ENCODE measurements at regions of chr15 and their contacts with region 1.

Region 1: DNA sequence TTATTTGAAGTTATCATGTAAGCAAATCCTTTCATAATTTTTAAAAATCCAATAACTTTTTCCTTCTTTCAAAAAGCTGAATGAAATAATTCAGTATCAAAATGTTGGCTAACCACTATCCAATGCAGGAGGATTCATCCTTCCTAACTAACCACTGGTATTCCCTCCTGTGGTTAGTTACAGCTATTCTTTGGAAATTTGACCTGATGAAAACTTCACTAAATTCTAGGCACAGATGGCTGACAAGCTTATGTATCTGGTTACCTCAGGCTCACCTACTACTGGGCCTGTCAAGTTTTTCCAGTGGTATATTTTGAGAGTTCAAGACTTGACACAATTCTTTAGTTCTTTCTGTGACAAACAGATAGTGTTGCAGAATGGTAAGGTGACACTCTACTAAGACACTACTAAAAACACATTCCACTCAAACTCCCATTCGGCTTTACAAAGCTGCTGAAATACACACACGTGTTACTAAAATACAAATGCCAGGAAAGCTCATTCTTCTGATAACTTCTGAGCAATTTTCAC is 15.8 kb downstream of the NPTN start:
- DNase-seq: no peak
- ATAC-seq: no peak
- H3K4me3 ChIP-seq: no peak overlapping the region
- H3K4me3 Mint-ChIP-seq: no peak overlapping the region
- H3K27ac ChIP-seq: no peak overlapping the region
- H3K27ac Mint-ChIP-seq: no peak overlapping the region
- H3K4me1 ChIP-seq: peaks cover 0 to 2% of the 10 kb centered on the region in 2 experiments
- H3K4me1 Mint-ChIP-seq: peaks cover 52 to 59% (median 56%) of the 10 kb centered on the region in 3 donors
- H3K27me3 ChIP-seq: no peaks in the 10 kb centered on the region
- H3K27me3 Mint-ChIP-seq: no peaks in the 10 kb centered on the region

Region 2: GRCh38 chr15:73485372-73485771 is 132.0 kb before region 1 on chr15:
- CTCF ChIA-PET with region 1: no interaction called
- POLR2A ChIA-PET with region 1: no interaction called
- DNase-seq: no peak
- ATAC-seq: no peak
- H3K4me3 ChIP-seq: no peak overlapping the region
- H3K4me3 Mint-ChIP-seq: no peak overlapping the region
- H3K27ac ChIP-seq: no peak overlapping the region
- H3K27ac Mint-ChIP-seq: no peak overlapping the region
- H3K4me1 ChIP-seq: no peaks in the 10 kb centered on the region
- H3K4me1 Mint-ChIP-seq: no peaks in the 10 kb centered on the region
- H3K27me3 ChIP-seq: peaks cover 0 to 4% of the 10 kb centered on the region in 2 experiments
- H3K27me3 Mint-ChIP-seq: peaks cover 16 to 22% of the 10 kb centered on the region in 2 donors

Region 3: DNA sequence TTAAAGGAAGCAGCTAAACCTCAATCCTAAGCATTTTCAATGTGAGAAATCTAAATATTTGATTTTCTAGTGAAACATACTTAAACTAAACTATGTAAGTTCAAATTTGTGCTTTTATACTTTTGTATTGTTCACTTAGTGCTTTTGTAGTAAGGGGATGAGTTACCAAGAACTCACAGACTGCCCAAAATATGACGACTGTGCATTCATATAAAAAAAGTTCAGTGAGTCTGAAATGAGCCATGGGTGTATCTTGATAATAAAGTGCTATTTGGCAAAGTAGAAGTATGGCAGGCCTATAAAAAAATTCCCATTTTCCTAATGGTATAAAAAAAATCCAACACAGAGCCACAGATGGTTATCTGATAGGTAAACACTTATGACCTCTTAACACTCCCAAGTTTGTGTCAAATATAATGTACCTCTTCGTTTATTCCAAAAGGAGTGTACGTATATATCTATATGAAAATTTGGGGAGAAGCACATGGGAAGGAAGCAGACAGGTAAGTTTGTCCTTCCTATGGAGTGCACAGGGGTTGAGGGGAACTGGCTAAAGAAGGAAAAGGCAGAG is 50.3 kb before region 1 on chr15:
- CTCF ChIA-PET with region 1: interaction called in 1 of 2 experiments, 10 read pairs
- POLR2A ChIA-PET with region 1: interaction called in 1 of 2 experiments, 3 read pairs
- DNase-seq: no peak
- ATAC-seq: no peak
- H3K4me3 ChIP-seq: no peak overlapping the region
- H3K4me3 Mint-ChIP-seq: no peak overlapping the region
- H3K27ac ChIP-seq: no peak overlapping the region
- H3K27ac Mint-ChIP-seq: no peak overlapping the region
- H3K4me1 ChIP-seq: no peaks in the 10 kb centered on the region
- H3K4me1 Mint-ChIP-seq: no peaks in the 10 kb centered on the region
- H3K27me3 ChIP-seq: no peaks in the 10 kb centered on the region
- H3K27me3 Mint-ChIP-seq: no peaks in the 10 kb centered on the region

Region 4: DNA sequence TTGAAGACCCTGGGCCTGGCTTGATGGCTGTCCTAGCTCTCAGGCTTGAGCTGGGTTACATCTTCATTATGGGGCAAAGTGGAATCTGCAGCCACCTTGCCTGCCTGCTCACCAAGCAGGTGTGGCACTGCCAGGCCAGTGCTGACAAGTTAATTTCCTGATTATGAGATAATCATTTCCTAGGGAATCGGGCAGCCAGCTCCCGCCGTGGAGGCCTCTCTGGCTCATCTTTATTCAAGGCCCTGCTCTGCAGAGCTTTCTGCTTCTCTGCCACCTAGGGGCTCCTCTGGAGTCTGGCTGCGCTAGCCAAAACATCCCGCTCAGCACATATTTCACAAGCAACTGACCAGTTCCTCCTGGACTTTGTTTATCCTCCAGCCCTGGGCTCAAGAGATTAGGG is 318.8 kb after region 1 on chr15:
- CTCF ChIA-PET with region 1: no interaction called
- POLR2A ChIA-PET with region 1: no interaction called
- DNase-seq: no peak
- ATAC-seq: no peak
- H3K4me3 ChIP-seq: no peak overlapping the region
- H3K4me3 Mint-ChIP-seq: no peak overlapping the region
- H3K27ac ChIP-seq: no peak overlapping the region
- H3K27ac Mint-ChIP-seq: peak overlapping the region in 1 of 2 donors; percentile 2
- H3K4me1 ChIP-seq: peaks cover 0 to 8% of the 10 kb centered on the region in 2 experiments
- H3K4me1 Mint-ChIP-seq: peaks cover 8 to 40% (median 15%) of the 10 kb centered on the region in 3 donors
- H3K27me3 ChIP-seq: peaks cover 0 to 7% of the 10 kb centered on the region in 2 experiments
- H3K27me3 Mint-ChIP-seq: no peaks in the 10 kb centered on the region

Region 5: GRCh38 chr15:74776821-74777768 is 1159.7 kb after region 1 on chr15:
- CTCF ChIA-PET with region 1: no interaction called
- POLR2A ChIA-PET with region 1: no interaction called
- DNase-seq: peak in 30 of 35 experiments; percentile 39 to 88 (median 58)
- ATAC-seq: peak; percentile 26 to 63 (median 36)
- H3K4me3 ChIP-seq: peak overlapping the region; percentile 15 to 30
- H3K4me3 Mint-ChIP-seq: peak overlapping the region; percentile 74 to 97 (median 75)
- H3K27ac ChIP-seq: peak overlapping the region; percentile 97
- H3K27ac Mint-ChIP-seq: peak overlapping the region; percentile 99
- H3K4me1 ChIP-seq: peaks cover 50 to 82% of the 10 kb centered on the region in 2 experiments
- H3K4me1 Mint-ChIP-seq: peaks cover 67 to 88% (median 78%) of the 10 kb centered on the region in 3 donors
- H3K27me3 ChIP-seq: no peaks in the 10 kb centered on the region
- H3K27me3 Mint-ChIP-seq: no peaks in the 10 kb centered on the region

Measured in T-cell (primary cell).